WTC11 (cell line): ENCODE measurements at regions of chr19 and their contacts with region 1.

Region 1: GRCh38 chr19:49200238-49200862 is 42.8 kb downstream of the TRPM4 start:
- DNase-seq: peak; percentile 45
- ATAC-seq: peak; percentile 73
- H3K4me3 Mint-ChIP-seq: no peak overlapping the region
- H3K27ac Mint-ChIP-seq: no peak overlapping the region
- H3K4me1 Mint-ChIP-seq: no peaks in the 10 kb centered on the region
- H3K27me3 Mint-ChIP-seq: no peaks in the 10 kb centered on the region
- CTCF ChIP-seq: no peak

Region 2: DNA sequence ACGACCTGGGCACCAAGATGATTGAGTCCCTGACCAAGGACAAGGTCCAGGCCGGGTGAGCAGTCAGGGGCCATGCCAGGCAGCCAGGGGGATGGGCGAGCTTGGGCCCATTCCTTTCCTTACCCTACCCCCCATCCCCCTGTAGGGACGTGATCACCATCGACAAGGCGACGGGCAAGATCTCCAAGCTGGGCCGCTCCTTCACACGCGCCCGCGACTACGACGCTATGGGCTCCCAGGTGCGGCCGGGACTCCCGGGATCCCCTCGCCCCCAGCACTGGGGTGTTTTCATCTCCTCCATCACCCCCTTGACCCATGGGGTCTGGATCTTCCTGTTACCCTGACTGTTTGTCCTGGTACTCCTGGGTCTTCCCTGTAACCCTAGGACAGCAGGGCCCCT is 190.5 kb before region 1 on chr19:
- CTCF ChIA-PET with region 1: no interaction called
- POLR2A ChIA-PET with region 1: no interaction called
- DNase-seq: no peak
- ATAC-seq: no peak
- H3K4me3 Mint-ChIP-seq: no peak overlapping the region
- H3K27ac Mint-ChIP-seq: no peak overlapping the region
- H3K4me1 Mint-ChIP-seq: no peaks in the 10 kb centered on the region
- H3K27me3 Mint-ChIP-seq: no peaks in the 10 kb centered on the region
- CTCF ChIP-seq: no peak

Region 3: DNA sequence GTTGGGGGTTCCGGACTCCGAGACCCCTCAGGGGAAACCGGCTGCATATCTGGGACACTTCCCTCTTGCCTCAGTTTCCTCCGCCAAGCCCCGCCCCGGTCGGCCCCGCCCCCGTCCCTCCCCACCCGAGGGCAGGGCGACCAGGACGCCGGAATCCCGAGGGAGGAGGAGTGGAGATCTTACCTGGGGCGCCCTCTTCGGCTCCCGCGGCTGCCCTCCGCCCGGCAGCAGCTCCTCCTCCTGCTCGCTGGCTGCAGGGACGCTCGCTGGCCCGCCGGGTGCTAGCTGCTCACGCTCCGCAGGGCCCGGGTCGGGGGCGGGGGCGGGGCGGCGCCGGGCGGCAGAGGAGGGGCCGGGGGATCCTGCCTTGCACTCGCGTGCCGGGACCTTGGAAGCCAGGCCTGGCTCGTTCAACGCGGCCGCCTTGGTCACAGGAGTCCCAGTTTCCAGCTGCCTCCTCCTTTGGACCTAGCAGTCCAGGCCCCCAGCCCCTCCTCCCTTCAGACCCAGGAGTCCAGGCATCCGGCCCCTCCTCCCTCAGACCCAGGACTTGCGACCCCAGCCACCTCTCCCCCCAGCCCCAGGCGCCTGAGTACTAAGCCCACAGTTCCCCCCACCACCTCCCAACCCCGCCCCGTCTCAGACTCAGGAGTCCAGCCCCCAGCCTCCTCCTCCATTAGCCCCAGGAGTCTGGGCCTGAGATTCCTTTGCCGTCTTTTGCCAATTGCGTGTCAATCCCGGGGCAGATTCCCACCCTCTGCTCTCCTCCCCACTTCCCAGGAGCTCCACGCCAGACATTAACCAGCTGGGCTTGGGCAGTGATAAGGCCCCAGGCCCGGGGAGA is 135.4 kb before region 1 on chr19 and contains the start of gene NTF4:
- CTCF ChIA-PET with region 1: interaction called, 10 read pairs
- POLR2A ChIA-PET with region 1: no interaction called
- DNase-seq: peak; percentile 78
- ATAC-seq: peak; percentile 73
- H3K4me3 Mint-ChIP-seq: peak within 1 kb of the TSS; percentile 66
- H3K27ac Mint-ChIP-seq: no peak within 1 kb of the TSS
- H3K4me1 Mint-ChIP-seq: peaks cover 33% of the 10 kb centered on the region
- H3K27me3 Mint-ChIP-seq: peaks cover 79% of the 10 kb centered on the region
- CTCF ChIP-seq: no peak
- total RNA-seq, gene NTF4: 3.9 to 7.7 TPM (median 5.0 TPM) in 3 replicates

Region 4: DNA sequence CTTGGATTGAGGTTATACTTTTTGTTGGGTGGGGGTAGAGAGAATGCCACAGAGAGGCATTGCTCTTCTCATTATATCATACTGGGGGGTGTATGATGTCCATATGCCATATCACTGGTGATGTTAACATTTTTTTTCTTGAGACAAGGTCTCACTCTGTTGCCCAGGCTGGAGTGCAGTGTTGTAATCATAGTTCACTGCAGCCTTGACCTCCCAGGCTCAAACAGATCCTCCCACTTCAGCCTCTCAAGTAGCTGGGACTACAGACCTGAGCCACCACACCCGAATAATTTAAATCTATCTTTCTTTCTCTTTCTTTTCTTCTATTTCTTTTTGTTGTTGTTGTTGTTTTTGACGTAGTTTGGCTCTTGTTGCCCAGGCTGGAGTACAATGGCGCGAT is 120.0 kb before region 1 on chr19:
- CTCF ChIA-PET with region 1: no interaction called
- POLR2A ChIA-PET with region 1: no interaction called
- DNase-seq: no peak
- ATAC-seq: no peak
- H3K4me3 Mint-ChIP-seq: no peak overlapping the region
- H3K27ac Mint-ChIP-seq: no peak overlapping the region
- H3K4me1 Mint-ChIP-seq: peaks cover 4% of the 10 kb centered on the region
- H3K27me3 Mint-ChIP-seq: peaks cover 44% of the 10 kb centered on the region
- CTCF ChIP-seq: no peak

Region 5: GRCh38 chr19:49106648-49107135 is 93.7 kb before region 1 on chr19:
- CTCF ChIA-PET with region 1: interaction called, 30 read pairs
- POLR2A ChIA-PET with region 1: no interaction called
- DNase-seq: peak; percentile 83
- ATAC-seq: peak; percentile 80
- H3K4me3 Mint-ChIP-seq: peak overlapping the region; percentile 7; the same call in 1 of the 2 replicates
- H3K27ac Mint-ChIP-seq: peak overlapping the region; percentile 95
- H3K4me1 Mint-ChIP-seq: peaks cover 13% of the 10 kb centered on the region
- H3K27me3 Mint-ChIP-seq: no peaks in the 10 kb centered on the region
- CTCF ChIP-seq: peak; percentile 78

Region 6: GRCh38 chr19:49127674-49128544 is 72.4 kb before region 1 on chr19:
- CTCF ChIA-PET with region 1: interaction called, 27 read pairs
- POLR2A ChIA-PET with region 1: interaction called, 3 read pairs
- DNase-seq: peak; percentile 98
- ATAC-seq: peak; percentile 90
- H3K4me3 Mint-ChIP-seq: peak overlapping the region; percentile 89
- H3K27ac Mint-ChIP-seq: peak overlapping the region; percentile 97
- H3K4me1 Mint-ChIP-seq: peaks cover 25% of the 10 kb centered on the region
- H3K27me3 Mint-ChIP-seq: peaks cover 66% of the 10 kb centered on the region
- CTCF ChIP-seq: no peak

Region 7: GRCh38 chr19:49142866-49143335 is 57.4 kb before region 1 on chr19:
- CTCF ChIA-PET with region 1: interaction called, 98 read pairs
- POLR2A ChIA-PET with region 1: interaction called, 4 read pairs
- DNase-seq: peak; percentile 96
- ATAC-seq: peak; percentile 92
- H3K4me3 Mint-ChIP-seq: peak overlapping the region; percentile 89
- H3K27ac Mint-ChIP-seq: peak overlapping the region; percentile 39; the same call in 1 of the 2 replicates
- H3K4me1 Mint-ChIP-seq: peaks cover 31% of the 10 kb centered on the region
- H3K27me3 Mint-ChIP-seq: peaks cover 37% of the 10 kb centered on the region
- CTCF ChIP-seq: no peak

Region 8: DNA sequence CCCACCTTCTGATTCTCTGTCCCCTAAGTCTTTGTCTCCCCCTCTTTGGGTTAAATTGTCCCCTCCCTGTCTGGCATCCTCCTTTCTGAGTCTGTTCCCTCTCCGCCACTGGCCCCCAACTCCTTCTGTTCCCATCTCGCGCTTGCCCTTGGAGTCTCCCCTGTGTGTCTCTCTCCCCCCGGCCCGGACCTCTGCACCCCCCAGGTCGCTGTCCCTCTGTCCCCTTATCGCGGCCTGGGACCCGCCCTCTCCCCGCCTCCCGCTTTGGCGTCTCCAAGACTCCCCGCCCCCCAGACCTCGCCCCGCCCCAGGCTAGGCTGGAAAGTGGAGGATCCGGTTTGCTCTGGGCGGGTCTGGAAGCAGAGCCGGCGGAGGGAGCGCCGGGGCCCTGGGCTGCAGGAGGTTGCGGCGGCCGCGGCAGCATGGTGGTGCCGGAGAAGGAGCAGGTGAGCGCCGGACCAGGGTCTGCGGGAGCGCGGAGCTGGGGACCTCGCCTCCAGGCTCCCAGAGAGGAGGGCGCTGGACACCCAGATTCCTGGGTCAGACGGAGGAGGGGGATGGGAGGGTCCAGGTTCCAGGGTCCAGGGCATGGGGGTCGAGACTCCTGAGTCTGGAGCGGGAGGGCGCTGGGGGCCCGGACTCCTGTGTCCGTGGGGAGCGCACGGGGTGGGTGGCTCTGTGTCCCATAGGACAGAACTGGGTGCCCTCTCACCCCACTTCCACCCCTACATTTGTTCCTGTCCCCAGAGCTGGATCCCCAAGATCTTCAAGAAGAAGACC is 42.7 kb before region 1 on chr19 and contains the start of gene TRPM4:
- CTCF ChIA-PET with region 1: interaction called, 98 read pairs
- POLR2A ChIA-PET with region 1: no interaction called
- DNase-seq: peak; percentile 97
- ATAC-seq: peak; percentile 96
- H3K4me3 Mint-ChIP-seq: peak within 1 kb of the TSS; percentile 73
- H3K27ac Mint-ChIP-seq: peak within 1 kb of the TSS; percentile 34; the same call in 1 of the 2 replicates
- H3K4me1 Mint-ChIP-seq: peaks cover 27% of the 10 kb centered on the region
- H3K27me3 Mint-ChIP-seq: peaks cover 58% of the 10 kb centered on the region
- CTCF ChIP-seq: no peak
- total RNA-seq, gene TRPM4: 15.5 to 24.8 TPM (median 23.6 TPM) in 3 replicates

Region 9: DNA sequence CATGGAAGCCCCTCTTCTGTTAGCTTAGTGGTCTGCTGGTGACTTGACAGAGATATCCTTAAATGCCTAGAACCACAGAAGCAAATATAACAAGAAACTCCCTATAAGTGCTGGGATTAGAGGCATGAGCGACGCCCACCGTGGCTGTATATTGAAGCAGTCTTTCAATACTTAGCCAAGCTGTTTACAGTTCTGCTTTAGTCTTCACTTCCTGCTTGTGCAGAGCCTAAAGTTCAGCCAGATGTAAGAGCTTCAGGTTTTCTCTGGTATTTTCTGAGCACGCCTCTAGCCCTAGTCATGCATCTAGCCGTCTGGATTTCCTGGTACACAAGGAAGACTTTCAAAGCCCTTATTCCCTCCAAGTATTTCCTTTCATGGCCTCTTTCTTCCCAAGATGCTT is 14.2 kb before region 1 on chr19:
- CTCF ChIA-PET with region 1: interaction called, 20 read pairs
- POLR2A ChIA-PET with region 1: no interaction called
- DNase-seq: no peak
- ATAC-seq: no peak
- H3K4me3 Mint-ChIP-seq: no peak overlapping the region
- H3K27ac Mint-ChIP-seq: no peak overlapping the region
- H3K4me1 Mint-ChIP-seq: peaks cover 4% of the 10 kb centered on the region; the same call in 1 of the 2 replicates
- H3K27me3 Mint-ChIP-seq: peaks cover 3% of the 10 kb centered on the region; the same call in 1 of the 2 replicates
- CTCF ChIP-seq: no peak

Region 10: DNA sequence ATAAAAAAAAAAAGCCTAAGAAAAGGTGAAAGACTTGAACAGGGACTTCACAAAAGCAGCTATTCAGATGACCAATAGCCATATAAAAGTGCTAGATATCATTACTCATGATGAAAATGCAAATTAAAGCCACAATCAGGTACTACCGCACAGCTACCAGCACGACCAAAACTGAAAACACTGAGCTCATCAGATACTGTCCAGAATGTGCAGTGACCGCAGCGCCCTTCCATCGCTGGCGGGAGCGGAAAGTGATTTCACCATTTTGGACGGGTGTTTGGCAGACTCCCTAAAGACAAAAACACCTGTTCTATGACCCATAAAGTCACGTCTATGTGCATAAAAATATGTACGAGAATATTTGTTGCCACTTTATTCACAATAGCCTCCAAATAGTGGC is 63.9 kb after region 1 on chr19:
- CTCF ChIA-PET with region 1: no interaction called
- POLR2A ChIA-PET with region 1: no interaction called
- DNase-seq: no peak
- ATAC-seq: no peak
- H3K4me3 Mint-ChIP-seq: no peak overlapping the region
- H3K27ac Mint-ChIP-seq: no peak overlapping the region
- H3K4me1 Mint-ChIP-seq: peaks cover 2% of the 10 kb centered on the region; the same call in 1 of the 2 replicates
- H3K27me3 Mint-ChIP-seq: peaks cover 24% of the 10 kb centered on the region
- CTCF ChIP-seq: no peak